ENCODE measurements at regions of chr1 and their contacts with region 1.

Region 1: DNA sequence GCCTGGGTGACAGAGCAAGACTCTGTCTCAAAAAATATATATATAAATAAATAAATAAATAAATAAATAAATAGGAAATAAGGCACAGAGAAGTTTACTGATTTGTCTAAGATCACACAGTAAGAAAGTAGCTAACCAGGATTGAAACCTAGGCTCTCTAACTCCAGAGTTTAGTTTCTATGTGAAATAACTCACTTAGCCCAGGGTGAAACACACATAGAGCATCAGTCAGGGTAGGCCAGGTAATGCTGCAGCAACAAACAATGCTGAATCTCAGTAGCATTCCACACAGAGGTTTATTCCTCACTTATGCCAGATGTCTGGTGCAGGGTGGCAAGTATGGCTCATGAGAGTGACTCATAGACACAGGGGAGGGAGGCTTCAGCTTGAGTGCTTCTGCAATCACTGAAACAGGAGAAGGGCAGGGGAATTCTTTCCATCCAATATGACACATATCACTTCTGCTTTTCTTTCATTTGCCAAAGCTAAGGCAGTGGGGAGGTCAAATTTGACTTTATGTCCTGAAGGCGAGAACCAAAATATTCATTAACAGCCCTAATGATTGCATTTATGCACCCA is 37.1 kb upstream of the KANK4 start:
- DNase-seq: no peak
- ATAC-seq: 0 out of 2 replicates have a peak, but pooled peaks have one; percentile 66
- H3K4me3 ChIP-seq: no peak overlapping the region
- H3K27ac ChIP-seq: no peak overlapping the region
- H3K4me1 ChIP-seq: no peaks in the 10 kb centered on the region
- H3K27me3 ChIP-seq: no peaks in the 10 kb centered on the region
- CTCF ChIP-seq: no peak

Region 2: DNA sequence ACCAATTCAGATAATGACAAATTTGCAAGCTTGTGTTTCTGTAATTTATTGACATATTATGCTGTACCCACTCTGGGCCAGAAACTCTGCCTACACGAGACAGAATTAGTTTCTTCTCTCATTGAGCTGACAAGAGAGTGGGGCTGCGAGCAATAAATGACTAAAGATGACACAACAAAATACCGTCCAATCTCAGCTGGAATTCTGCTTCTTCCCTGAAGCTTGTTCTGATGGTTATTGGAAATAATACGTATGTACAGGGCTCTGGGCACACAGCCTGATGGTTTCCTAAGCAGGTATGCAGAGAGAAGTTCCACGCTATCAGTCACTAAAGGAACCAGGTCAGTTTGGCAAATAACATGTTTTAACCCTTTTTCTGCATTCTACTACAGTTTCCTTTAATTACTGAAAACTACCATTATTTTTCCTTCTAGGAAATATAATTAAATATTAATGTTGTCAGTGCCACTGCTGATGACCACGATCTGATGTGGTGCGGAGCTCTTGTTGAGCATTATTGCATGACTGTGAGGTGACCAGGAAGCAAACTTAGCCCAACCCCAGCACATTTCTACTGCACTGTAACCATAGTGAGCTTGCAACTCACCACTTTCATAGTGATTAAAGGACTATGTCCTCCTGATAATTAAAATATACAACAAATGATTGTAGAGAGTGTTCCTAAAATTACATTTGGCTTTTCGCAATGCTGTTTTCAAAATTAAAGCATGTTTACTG is 383.1 kb before region 1 on chr1:
- CTCF ChIA-PET with region 1: no interaction called
- POLR2A ChIA-PET with region 1: interaction called, 10 read pairs
- in situ Hi-C with region 1: no loop called
- intact Hi-C with region 1: no loop called
- DNase-seq: no peak
- ATAC-seq: no peak
- H3K4me3 ChIP-seq: no peak overlapping the region
- H3K27ac ChIP-seq: no peak overlapping the region
- H3K4me1 ChIP-seq: no peaks in the 10 kb centered on the region
- H3K27me3 ChIP-seq: no peaks in the 10 kb centered on the region
- CTCF ChIP-seq: no peak

Region 3: DNA sequence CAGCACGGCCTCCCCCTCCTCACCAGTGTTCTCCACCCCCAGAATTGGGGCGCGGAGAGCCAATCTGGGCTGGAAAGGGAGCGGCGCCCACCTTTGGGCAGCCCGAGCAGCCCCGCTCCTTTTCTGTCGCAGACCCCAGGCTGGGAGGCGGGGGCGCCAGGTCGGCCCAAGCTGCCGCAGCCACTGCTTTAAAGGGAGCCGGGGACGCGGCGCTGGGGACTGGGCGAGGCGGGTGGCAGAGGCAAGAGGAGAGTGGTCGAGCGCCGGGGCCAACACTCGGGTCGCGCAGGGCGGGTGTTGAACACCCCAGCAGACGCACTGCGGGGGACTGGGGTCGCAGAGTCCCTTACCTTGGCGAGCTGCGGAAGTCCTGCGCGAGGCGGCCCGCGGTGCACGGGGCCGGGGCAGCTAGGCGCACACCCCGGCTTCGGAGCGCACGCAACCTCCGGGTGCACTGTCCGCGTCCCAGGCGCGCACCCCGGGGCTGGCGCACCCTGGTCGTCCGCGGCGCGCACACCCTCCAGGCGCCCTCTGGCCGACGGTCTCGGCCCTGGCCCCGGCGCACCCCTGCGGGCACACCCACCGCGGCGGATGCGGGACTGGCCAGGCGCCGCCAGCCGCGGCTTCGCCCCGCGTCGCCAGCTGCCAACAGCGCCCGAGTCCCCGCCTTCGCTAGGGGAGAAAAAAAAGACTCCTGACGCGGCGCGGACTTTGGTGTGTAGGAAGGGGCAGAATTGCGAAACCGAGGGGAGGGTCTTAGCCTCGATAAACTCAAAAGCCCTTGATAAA is 37.4 kb before region 1 on chr1 and contains the start of gene KANK4:
- CTCF ChIA-PET with region 1: no interaction called
- POLR2A ChIA-PET with region 1: no interaction called
- in situ Hi-C with region 1: no loop called
- intact Hi-C with region 1: no loop called
- DNase-seq: no peak
- ATAC-seq: peak; percentile 67
- H3K4me3 ChIP-seq: peak within 1 kb of the TSS; percentile 18 to 32
- H3K27ac ChIP-seq: no peak within 1 kb of the TSS
- H3K4me1 ChIP-seq: no peaks in the 10 kb centered on the region
- H3K27me3 ChIP-seq: peaks cover 14% of the 10 kb centered on the region
- CTCF ChIP-seq: no peak
- total RNA-seq, gene KANK4: 0.18 TPM

Region 4: DNA sequence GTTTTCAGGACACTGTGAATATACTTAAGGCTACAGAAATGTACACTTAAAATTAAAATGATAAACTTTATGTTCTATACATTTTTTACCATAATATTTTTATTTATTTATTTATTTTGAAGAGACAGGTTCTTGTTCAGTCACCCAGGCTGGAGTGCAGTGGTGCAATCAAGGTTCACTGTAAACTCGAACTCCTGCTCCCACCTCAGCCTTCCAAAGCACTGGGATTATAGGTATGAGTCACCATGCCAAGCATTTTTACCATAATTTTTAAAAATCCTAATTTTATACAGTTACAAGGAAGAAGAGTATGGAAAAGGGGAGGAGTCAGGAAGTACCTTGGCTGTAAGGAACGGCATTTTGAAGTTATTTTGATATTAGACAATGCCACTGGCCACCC is 217.3 kb after region 1 on chr1:
- CTCF ChIA-PET with region 1: no interaction called
- POLR2A ChIA-PET with region 1: no interaction called
- in situ Hi-C with region 1: no loop called
- intact Hi-C with region 1: no loop called
- DNase-seq: no peak
- ATAC-seq: no peak
- H3K4me3 ChIP-seq: no peak overlapping the region
- H3K27ac ChIP-seq: no peak overlapping the region
- H3K4me1 ChIP-seq: no peaks in the 10 kb centered on the region
- H3K27me3 ChIP-seq: no peaks in the 10 kb centered on the region
- CTCF ChIP-seq: no peak